B cell (primary cell): ENCODE measurements at regions of chr6 and their contacts with region 1.

Region 1: GRCh38 chr6:36340618-36341454 is 4.1 kb upstream of the BNIP5 start:
- DNase-seq: peak; percentile 77
- ATAC-seq: peak; percentile 84
- H3K4me3 ChIP-seq: peak overlapping the region in 3 of 5 experiments; percentile 11 to 43 (median 27)
- H3K4me3 Mint-ChIP-seq: peak overlapping the region; percentile 84
- H3K27ac ChIP-seq: no peak overlapping the region
- H3K27ac Mint-ChIP-seq: peak overlapping the region; percentile 70
- H3K4me1 ChIP-seq: peaks cover 15 to 26% of the 10 kb centered on the region in 2 donors
- H3K4me1 Mint-ChIP-seq: peaks cover 18% of the 10 kb centered on the region
- H3K27me3 ChIP-seq: peaks cover 0 to 7% (median 0%) of the 10 kb centered on the region in 4 experiments
- H3K27me3 Mint-ChIP-seq: peaks cover 15% of the 10 kb centered on the region
- CTCF ChIP-seq: peak; percentile 99

Region 2: GRCh38 chr6:36350681-36351571 is 10.1 kb after region 1 on chr6:
- CTCF ChIA-PET with region 1: interaction called, 20 read pairs
- POLR2A ChIA-PET with region 1: no interaction called
- intact Hi-C with region 1: no loop called
- DNase-seq: no peak
- ATAC-seq: no peak
- H3K4me3 ChIP-seq: no peak overlapping the region
- H3K4me3 Mint-ChIP-seq: no peak overlapping the region
- H3K27ac ChIP-seq: no peak overlapping the region
- H3K27ac Mint-ChIP-seq: no peak overlapping the region
- H3K4me1 ChIP-seq: no peaks in the 10 kb centered on the region
- H3K4me1 Mint-ChIP-seq: no peaks in the 10 kb centered on the region
- H3K27me3 ChIP-seq: no peaks in the 10 kb centered on the region
- H3K27me3 Mint-ChIP-seq: no peaks in the 10 kb centered on the region
- CTCF ChIP-seq: no peak

Region 3: DNA sequence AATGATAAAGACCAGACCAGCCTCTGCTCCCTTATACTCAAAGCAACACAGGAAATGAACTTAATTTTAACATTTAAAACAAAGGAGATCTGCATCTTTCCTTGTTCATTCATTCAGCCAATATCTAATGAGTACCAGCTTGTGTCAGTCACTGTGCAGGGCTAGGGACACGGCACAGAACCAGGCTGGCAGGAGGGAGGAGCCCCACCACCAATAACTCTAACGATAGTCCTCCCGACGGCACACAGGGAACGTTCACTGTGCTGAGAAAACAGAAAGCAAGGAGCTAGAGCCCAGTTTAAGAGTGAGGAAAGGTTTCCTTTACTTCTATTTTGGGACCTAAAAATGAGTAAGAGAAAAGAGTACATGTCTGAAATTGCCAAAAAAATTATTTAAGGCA is 36.8 kb after region 1 on chr6:
- CTCF ChIA-PET with region 1: no interaction called
- POLR2A ChIA-PET with region 1: no interaction called
- intact Hi-C with region 1: no loop called
- DNase-seq: no peak
- ATAC-seq: no peak
- H3K4me3 ChIP-seq: no peak overlapping the region
- H3K4me3 Mint-ChIP-seq: no peak overlapping the region
- H3K27ac ChIP-seq: no peak overlapping the region
- H3K27ac Mint-ChIP-seq: no peak overlapping the region
- H3K4me1 ChIP-seq: peaks cover 0 to 6% of the 10 kb centered on the region in 2 donors
- H3K4me1 Mint-ChIP-seq: peaks cover 8% of the 10 kb centered on the region
- H3K27me3 ChIP-seq: no peaks in the 10 kb centered on the region
- H3K27me3 Mint-ChIP-seq: peaks cover 4% of the 10 kb centered on the region
- CTCF ChIP-seq: no peak

Region 4: GRCh38 chr6:36997811-36998722 is 657.2 kb after region 1 on chr6:
- CTCF ChIA-PET with region 1: no interaction called
- POLR2A ChIA-PET with region 1: no interaction called
- intact Hi-C with region 1: no loop called
- DNase-seq: no peak
- ATAC-seq: no peak
- H3K4me3 ChIP-seq: no peak overlapping the region
- H3K4me3 Mint-ChIP-seq: no peak overlapping the region
- H3K27ac ChIP-seq: no peak overlapping the region
- H3K27ac Mint-ChIP-seq: no peak overlapping the region
- H3K4me1 ChIP-seq: peaks cover 18 to 31% of the 10 kb centered on the region in 2 donors
- H3K4me1 Mint-ChIP-seq: peaks cover 40% of the 10 kb centered on the region
- H3K27me3 ChIP-seq: no peaks in the 10 kb centered on the region
- H3K27me3 Mint-ChIP-seq: no peaks in the 10 kb centered on the region
- CTCF ChIP-seq: no peak